Calu3 (cell line): ENCODE measurements at regions of chr4 and their contacts with region 1.

Region 1: GRCh38 chr4:171834640-171835039 is 21.4 kb downstream of the GALNTL6 start:
- DNase-seq: no peak
- H3K4me3 Mint-ChIP-seq: no peak overlapping the region
- H3K27ac Mint-ChIP-seq: no peak overlapping the region
- H3K4me1 Mint-ChIP-seq: no peaks in the 10 kb centered on the region
- H3K27me3 Mint-ChIP-seq: no peaks in the 10 kb centered on the region
- CTCF ChIP-seq: no peak

Region 2: GRCh38 chr4:171924746-171925376 is 90.2 kb after region 1 on chr4:
- CTCF ChIA-PET with region 1: no interaction called
- intact Hi-C with region 1: no loop called
- DNase-seq: no peak
- H3K4me3 Mint-ChIP-seq: no peak overlapping the region
- H3K27ac Mint-ChIP-seq: no peak overlapping the region
- H3K4me1 Mint-ChIP-seq: no peaks in the 10 kb centered on the region
- H3K27me3 Mint-ChIP-seq: no peaks in the 10 kb centered on the region
- CTCF ChIP-seq: no peak

Region 3: GRCh38 chr4:171966356-171966755 is 131.7 kb after region 1 on chr4:
- CTCF ChIA-PET with region 1: no interaction called
- intact Hi-C with region 1: no loop called
- DNase-seq: no peak
- H3K4me3 Mint-ChIP-seq: no peak overlapping the region
- H3K27ac Mint-ChIP-seq: no peak overlapping the region
- H3K4me1 Mint-ChIP-seq: no peaks in the 10 kb centered on the region
- H3K27me3 Mint-ChIP-seq: no peaks in the 10 kb centered on the region
- CTCF ChIP-seq: no peak

Region 4: DNA sequence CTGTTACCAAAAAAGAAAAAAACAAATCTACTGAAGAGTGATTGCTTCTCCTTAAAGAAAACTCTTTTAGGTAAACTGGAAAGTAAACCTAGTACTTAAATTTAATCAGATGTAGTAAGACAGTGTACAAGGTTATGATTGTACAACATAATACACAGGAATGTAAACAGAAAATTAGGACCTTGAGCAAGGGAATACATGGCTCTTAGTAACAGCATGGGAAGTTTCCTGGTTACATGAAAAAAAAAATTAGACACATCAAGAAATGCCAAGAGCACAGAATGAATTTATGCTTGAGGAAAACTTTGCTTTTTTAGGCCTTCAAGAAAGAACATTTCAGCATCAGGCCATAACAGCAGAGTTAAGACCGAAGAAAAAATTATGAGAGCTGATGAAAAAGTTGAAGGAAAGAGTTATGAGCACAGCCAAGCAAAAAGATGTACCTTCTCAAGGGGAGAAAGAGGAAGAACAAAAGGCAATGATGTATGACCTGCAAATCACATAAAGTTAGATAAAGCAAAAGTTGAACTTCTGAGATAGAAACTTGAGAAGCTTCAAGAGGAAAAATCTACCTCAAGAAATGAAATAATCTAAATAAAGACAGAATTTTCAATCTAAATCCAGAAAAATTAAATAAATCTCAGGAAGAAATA is 290.1 kb after region 1 on chr4:
- CTCF ChIA-PET with region 1: no interaction called
- intact Hi-C with region 1: loop called (anchors 5 kb)
- DNase-seq: no peak
- H3K4me3 Mint-ChIP-seq: no peak overlapping the region
- H3K27ac Mint-ChIP-seq: no peak overlapping the region
- H3K4me1 Mint-ChIP-seq: no peaks in the 10 kb centered on the region
- H3K27me3 Mint-ChIP-seq: no peaks in the 10 kb centered on the region
- CTCF ChIP-seq: no peak

Region 5: GRCh38 chr4:172390341-172390740 is 555.7 kb after region 1 on chr4:
- CTCF ChIA-PET with region 1: no interaction called
- intact Hi-C with region 1: no loop called
- DNase-seq: no peak
- H3K4me3 Mint-ChIP-seq: no peak overlapping the region
- H3K27ac Mint-ChIP-seq: no peak overlapping the region
- H3K4me1 Mint-ChIP-seq: no peaks in the 10 kb centered on the region
- H3K27me3 Mint-ChIP-seq: no peaks in the 10 kb centered on the region
- CTCF ChIP-seq: no peak